IMR-90 (cell line): ENCODE measurements at regions of chr21 and their contacts with region 1.

Region 1: DNA sequence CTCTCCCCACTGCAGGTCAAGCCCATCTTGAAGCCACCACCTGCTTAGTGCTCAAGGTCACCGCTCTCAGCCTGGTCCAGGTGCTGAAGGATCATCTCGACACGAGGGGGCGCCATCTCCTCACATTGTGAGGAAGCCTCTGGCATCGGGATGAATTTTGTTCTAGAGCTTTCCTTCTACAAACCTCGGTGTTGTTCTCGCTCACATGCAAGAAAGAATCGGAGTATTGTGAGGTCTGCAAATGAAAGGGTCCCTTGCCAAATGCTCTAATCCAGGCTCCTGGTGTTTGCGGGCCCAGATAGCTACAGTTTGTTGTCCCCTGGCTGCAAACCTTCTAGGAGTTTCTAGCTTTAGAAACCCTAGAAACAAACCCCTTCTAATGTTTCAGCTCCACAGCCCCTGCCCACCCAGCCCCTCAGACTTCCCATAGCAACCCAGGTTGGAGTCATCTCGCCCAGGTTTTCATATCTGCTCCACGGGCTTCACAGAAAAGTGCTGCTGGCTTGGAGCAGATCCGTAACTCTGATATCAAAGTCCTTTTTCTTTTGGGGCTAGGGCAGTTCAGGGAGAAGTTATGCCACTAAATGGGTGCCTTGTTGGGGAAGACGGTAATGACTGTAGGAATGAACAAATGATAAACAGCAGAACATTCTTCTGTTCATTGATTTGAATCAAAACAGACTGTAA is 8.6 kb upstream of the ATP5PO start:
- DNase-seq: peak; percentile 72
- ATAC-seq: peak; percentile 97
- H3K4me3 ChIP-seq: no peak overlapping the region
- H3K27ac ChIP-seq: no peak overlapping the region
- H3K4me1 ChIP-seq: no peaks in the 10 kb centered on the region; the same call in 1 of the 2 replicates
- H3K27me3 ChIP-seq: peaks cover 6% of the 10 kb centered on the region
- CTCF ChIP-seq: peak; percentile 96
- POLR2A ChIP-seq: peak; percentile 38; the same call in 1 of the 2 replicates
- RAD21 ChIP-seq: peak; percentile 100

Region 2: DNA sequence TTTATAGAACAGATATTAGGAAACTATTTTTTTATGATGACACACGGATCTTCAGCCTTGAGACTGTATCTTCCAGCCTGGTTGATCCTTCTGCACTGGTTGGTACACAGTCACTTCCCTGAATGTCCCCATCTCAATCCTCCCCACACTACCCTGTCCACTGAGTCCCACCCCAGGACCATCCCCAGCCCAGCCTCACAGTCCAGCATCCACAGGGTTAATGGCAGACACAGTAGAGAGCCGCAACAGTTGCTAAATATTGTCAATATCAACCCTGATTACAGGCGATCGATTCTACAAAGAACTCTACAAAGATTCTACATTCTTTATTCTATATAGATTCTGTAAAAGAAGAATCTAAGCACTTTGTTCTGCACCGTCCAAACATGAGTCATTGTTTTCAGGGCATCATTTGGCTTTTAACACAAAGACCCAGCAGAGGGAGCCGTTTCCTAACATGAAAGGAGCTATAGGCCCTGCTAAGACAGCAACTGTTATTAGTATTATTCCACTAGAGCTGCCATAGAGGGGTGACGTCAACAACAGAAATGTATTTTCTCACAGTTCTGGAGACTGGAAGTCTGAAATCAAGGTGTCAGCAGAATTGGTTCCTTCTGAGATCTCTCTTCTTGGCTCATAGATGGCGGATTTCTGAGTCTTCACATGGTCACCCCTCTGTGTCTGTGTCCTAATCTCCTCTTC is 724.6 kb before region 1 on chr21:
- CTCF ChIA-PET with region 1: no interaction called
- POLR2A ChIA-PET with region 1: no interaction called
- dilution Hi-C with region 1: no loop called
- in situ Hi-C with region 1: no loop called
- intact Hi-C with region 1: no loop called
- DNase-seq: peak; percentile 95
- ATAC-seq: peak; percentile 78
- H3K4me3 ChIP-seq: no peak overlapping the region
- H3K27ac ChIP-seq: no peak overlapping the region
- H3K4me1 ChIP-seq: peaks cover 8% of the 10 kb centered on the region
- H3K27me3 ChIP-seq: peaks cover 4% of the 10 kb centered on the region; the same call in 1 of the 2 replicates
- CTCF ChIP-seq: peak; percentile 97
- POLR2A ChIP-seq: no peak
- RAD21 ChIP-seq: peak; percentile 97

Region 3: DNA sequence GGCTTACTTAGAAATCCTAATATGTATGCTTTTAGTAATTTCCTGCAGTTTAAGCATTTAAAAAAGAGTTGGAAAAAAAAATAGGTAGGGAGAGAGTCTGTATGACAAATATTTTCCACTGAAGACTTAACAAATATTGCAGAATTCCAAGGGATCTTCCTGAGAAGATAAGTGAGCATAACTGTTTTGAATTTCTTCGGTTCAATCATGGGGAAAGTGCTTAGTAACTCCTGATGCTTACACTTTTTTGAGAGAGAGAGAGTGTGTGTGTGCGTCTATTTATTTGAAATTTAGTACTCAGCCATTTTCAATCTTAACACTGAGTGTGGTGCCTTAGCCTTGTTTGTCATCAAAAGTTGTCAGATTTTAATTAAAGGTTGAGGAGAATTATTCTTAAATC is 362.8 kb before region 1 on chr21:
- CTCF ChIA-PET with region 1: no interaction called
- POLR2A ChIA-PET with region 1: no interaction called
- dilution Hi-C with region 1: no loop called
- in situ Hi-C with region 1: no loop called
- intact Hi-C with region 1: no loop called
- DNase-seq: no peak
- ATAC-seq: no peak
- H3K4me3 ChIP-seq: no peak overlapping the region
- H3K27ac ChIP-seq: no peak overlapping the region
- H3K4me1 ChIP-seq: peaks cover 2% of the 10 kb centered on the region; the same call in 1 of the 2 replicates
- H3K27me3 ChIP-seq: no peaks in the 10 kb centered on the region
- CTCF ChIP-seq: no peak
- POLR2A ChIP-seq: no peak
- RAD21 ChIP-seq: no peak

Region 4: DNA sequence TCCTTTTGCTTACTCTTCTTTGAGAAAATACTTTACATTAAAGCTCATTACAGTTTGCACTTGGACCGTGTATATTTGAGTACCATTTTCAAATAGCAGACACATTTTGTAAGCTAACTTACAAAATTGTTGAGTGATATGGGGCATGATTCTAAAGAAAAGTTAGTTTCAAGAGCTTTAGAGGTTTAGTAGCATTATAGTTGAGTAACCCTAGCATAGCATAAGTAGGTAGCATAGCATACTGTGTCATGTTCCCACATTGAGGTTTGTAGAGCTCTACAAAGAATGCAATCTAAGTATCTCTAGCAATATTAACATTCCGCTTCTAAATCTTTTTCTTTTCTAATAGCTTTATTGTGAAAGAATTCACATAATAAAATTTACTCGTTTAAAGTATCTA is 189.9 kb before region 1 on chr21:
- CTCF ChIA-PET with region 1: no interaction called
- POLR2A ChIA-PET with region 1: no interaction called
- dilution Hi-C with region 1: no loop called
- in situ Hi-C with region 1: no loop called
- intact Hi-C with region 1: no loop called
- DNase-seq: peak; percentile 58
- ATAC-seq: peak; percentile 66; the same call in 1 of the 2 replicates
- H3K4me3 ChIP-seq: no peak overlapping the region
- H3K27ac ChIP-seq: no peak overlapping the region
- H3K4me1 ChIP-seq: peaks cover 4% of the 10 kb centered on the region; the same call in 1 of the 2 replicates
- H3K27me3 ChIP-seq: no peaks in the 10 kb centered on the region
- CTCF ChIP-seq: no peak
- POLR2A ChIP-seq: no peak
- RAD21 ChIP-seq: no peak

Region 5: GRCh38 chr21:34091607-34092006 is 167.4 kb after region 1 on chr21:
- CTCF ChIA-PET with region 1: interaction called, 3 read pairs
- POLR2A ChIA-PET with region 1: no interaction called
- dilution Hi-C with region 1: no loop called
- in situ Hi-C with region 1: loop called (anchors 5 kb)
- intact Hi-C with region 1: no loop called
- DNase-seq: no peak
- ATAC-seq: no peak
- H3K4me3 ChIP-seq: no peak overlapping the region
- H3K27ac ChIP-seq: no peak overlapping the region
- H3K4me1 ChIP-seq: peaks cover 8% of the 10 kb centered on the region
- H3K27me3 ChIP-seq: no peaks in the 10 kb centered on the region
- CTCF ChIP-seq: no peak
- POLR2A ChIP-seq: no peak
- RAD21 ChIP-seq: no peak

Region 6: GRCh38 chr21:34202553-34203372 is 278.5 kb after region 1 on chr21:
- CTCF ChIA-PET with region 1: interaction called, 5 read pairs
- POLR2A ChIA-PET with region 1: no interaction called
- dilution Hi-C with region 1: no loop called
- in situ Hi-C with region 1: no loop called
- intact Hi-C with region 1: loop called (anchors 1 kb)
- DNase-seq: no peak
- ATAC-seq: no peak
- H3K4me3 ChIP-seq: no peak overlapping the region
- H3K27ac ChIP-seq: no peak overlapping the region
- H3K4me1 ChIP-seq: peaks cover 15% of the 10 kb centered on the region
- H3K27me3 ChIP-seq: no peaks in the 10 kb centered on the region; the same call in 1 of the 2 replicates
- CTCF ChIP-seq: no peak
- POLR2A ChIP-seq: no peak
- RAD21 ChIP-seq: no peak

Region 7: GRCh38 chr21:34345091-34345871 is 421.1 kb after region 1 on chr21:
- CTCF ChIA-PET with region 1: interaction called, 25 read pairs
- POLR2A ChIA-PET with region 1: no interaction called
- dilution Hi-C with region 1: no loop called
- in situ Hi-C with region 1: no loop called
- intact Hi-C with region 1: loop called (anchors 1 kb)
- DNase-seq: peak; percentile 60
- ATAC-seq: peak; percentile 52
- H3K4me3 ChIP-seq: no peak overlapping the region
- H3K27ac ChIP-seq: peak overlapping the region; percentile 59
- H3K4me1 ChIP-seq: peaks cover 22% of the 10 kb centered on the region
- H3K27me3 ChIP-seq: peaks cover 2% of the 10 kb centered on the region; the same call in 1 of the 2 replicates
- CTCF ChIP-seq: no peak
- POLR2A ChIP-seq: no peak
- RAD21 ChIP-seq: no peak